Activated CD4-positive, alpha-beta memory T cell treated with anti-CD3 and anti-CD28 coated beads for 36 hours (primary cell): ENCODE measurements at regions of chr7 and their contacts with region 1.

Region 1: GRCh38 chr7:50418086-50418515 is 32.0 kb downstream of the FIGNL1 start:
- DNase-seq: peak; percentile 87
- H3K4me3 Mint-ChIP-seq: no peak overlapping the region
- H3K27ac Mint-ChIP-seq: no peak overlapping the region
- H3K4me1 Mint-ChIP-seq: peaks cover 24% of the 10 kb centered on the region
- H3K27me3 Mint-ChIP-seq: no peaks in the 10 kb centered on the region

Region 2: DNA sequence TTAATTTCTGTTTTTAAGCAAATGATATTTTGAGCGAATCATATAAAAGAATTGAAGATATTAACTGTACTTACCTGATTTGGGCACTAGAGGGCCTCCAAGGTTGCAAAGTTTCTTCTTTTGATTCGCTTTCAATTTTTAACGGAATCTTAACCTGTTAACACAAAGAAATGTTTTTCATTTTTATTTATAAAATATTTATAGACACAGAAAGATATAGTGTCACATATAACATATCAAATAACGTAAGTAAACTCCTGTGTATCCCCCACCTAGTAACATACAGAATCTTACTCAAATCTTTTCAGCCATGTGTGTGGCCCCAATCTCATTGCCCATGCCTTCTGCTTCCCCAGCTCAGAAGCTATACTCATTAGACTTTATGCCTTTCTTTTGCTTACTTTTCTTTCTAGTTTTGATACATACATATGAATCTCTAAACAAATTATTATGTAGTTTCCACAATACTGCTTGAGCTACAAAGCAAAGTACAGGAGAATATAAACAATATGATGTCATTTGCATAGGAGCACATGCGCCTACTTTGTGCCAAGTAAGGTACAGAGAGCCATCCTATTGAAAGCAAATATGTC is 275.6 kb before region 1 on chr7:
- CTCF ChIA-PET with region 1: interaction called, 96 read pairs
- POLR2A ChIA-PET with region 1: no interaction called
- intact Hi-C with region 1: loop called (anchors 1 kb)
- DNase-seq: no peak
- H3K4me3 Mint-ChIP-seq: peak overlapping the region; percentile 14
- H3K27ac Mint-ChIP-seq: peak overlapping the region; percentile 59
- H3K4me1 Mint-ChIP-seq: peaks cover 28% of the 10 kb centered on the region
- H3K27me3 Mint-ChIP-seq: peaks cover 2% of the 10 kb centered on the region

Region 3: GRCh38 chr7:50156706-50157105 is 261.4 kb before region 1 on chr7:
- CTCF ChIA-PET with region 1: interaction called, 10 read pairs
- POLR2A ChIA-PET with region 1: no interaction called
- intact Hi-C with region 1: no loop called
- DNase-seq: no peak
- H3K4me3 Mint-ChIP-seq: peak overlapping the region; percentile 49
- H3K27ac Mint-ChIP-seq: peak overlapping the region; percentile 70
- H3K4me1 Mint-ChIP-seq: peaks cover 34% of the 10 kb centered on the region
- H3K27me3 Mint-ChIP-seq: no peaks in the 10 kb centered on the region

Region 4: DNA sequence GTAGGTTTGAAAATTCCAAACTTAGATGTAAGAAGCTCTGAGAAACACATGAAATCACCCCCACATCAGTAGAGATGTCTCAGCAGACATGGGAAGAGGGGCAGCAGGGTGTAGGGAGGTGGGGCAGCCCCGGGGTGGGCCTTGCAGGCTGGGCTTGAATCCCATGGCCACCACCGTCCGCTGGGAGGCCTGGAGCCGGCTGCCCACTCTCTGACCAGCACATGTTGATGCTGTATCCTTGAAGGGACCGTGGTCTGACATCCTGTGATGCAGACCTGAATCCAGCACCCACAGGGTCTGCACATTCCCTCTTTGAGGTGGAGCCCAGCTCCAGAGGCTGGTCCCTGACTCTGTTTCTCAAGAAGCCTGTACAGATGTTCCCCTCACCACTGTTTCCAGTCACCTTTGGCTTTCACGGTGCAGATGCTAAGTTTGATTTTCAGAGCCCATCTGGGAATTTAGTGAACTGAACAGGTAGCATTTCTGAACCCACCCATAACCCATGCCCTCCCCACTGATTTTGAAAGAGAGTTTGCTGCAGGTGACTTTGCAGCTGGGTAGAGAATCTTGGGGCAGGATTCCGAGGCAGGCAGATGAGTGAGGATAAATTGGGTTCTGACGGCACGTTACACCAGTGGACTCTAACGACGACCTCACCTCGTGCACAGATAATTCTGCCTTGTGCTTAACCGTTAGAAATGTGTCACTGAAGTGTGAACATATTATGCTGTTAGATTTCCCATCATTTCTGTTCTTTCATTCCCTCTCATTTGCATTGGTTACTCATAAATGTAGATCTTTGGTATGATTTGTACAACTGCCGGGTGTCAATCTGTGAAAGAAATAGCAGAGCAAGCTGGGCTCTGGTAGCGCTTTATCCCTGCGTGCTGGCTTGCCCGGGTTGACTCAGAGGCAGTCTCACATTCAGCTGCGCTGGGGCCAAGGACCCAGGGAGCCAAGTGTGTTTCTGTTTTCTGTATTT is 67.8 kb before region 1 on chr7:
- CTCF ChIA-PET with region 1: interaction called, 18 read pairs
- POLR2A ChIA-PET with region 1: no interaction called
- intact Hi-C with region 1: no loop called
- DNase-seq: peak; percentile 94
- H3K4me3 Mint-ChIP-seq: peak overlapping the region; percentile 14
- H3K27ac Mint-ChIP-seq: peak overlapping the region; percentile 92
- H3K4me1 Mint-ChIP-seq: peaks cover 98% of the 10 kb centered on the region
- H3K27me3 Mint-ChIP-seq: no peaks in the 10 kb centered on the region

Region 5: DNA sequence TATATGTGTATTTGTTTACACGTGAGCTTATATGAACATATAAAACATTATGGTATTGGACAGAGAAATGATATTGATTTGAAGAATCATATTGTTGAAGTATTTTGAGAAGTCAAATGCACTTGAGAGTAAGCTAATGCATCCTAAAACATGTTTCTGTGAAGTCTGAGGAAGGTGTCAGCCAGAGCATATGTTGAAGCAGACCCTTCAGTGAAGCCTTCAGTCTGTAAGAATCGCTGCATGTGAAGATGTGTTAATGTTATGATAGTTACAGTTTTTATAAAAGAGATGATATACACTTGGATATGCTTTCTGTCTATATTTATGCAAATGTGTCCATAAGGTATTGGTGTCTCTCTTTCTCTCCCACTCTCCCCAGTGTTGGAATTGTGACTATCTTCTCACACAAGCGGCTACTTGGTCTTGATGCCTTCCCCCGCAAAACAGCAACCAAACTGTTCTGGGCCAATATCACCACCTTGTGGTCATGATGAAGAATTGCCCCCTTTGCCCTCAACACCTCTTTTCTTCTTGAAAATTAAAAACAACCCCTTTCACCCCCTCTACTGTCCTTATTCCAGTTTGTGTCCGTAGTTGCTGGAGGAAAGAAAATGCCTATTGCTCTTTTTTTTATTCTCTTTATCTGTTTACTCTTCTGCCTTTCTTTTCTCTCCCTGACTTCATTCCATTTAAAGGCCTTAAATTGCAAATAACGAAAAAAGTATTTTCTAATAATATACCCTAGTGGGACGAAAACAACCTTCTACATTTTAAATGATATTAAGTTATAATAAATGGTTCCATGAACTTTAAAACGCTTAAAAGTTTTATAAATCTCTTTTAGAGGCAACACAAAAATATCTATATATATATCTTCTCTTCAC is 48.7 kb before region 1 on chr7:
- CTCF ChIA-PET with region 1: interaction called, 57 read pairs
- POLR2A ChIA-PET with region 1: no interaction called
- intact Hi-C with region 1: loop called (anchors 2 kb)
- DNase-seq: peak; percentile 56
- H3K4me3 Mint-ChIP-seq: no peak overlapping the region
- H3K27ac Mint-ChIP-seq: peak overlapping the region; percentile 93
- H3K4me1 Mint-ChIP-seq: peaks cover 97% of the 10 kb centered on the region
- H3K27me3 Mint-ChIP-seq: no peaks in the 10 kb centered on the region

Region 6: DNA sequence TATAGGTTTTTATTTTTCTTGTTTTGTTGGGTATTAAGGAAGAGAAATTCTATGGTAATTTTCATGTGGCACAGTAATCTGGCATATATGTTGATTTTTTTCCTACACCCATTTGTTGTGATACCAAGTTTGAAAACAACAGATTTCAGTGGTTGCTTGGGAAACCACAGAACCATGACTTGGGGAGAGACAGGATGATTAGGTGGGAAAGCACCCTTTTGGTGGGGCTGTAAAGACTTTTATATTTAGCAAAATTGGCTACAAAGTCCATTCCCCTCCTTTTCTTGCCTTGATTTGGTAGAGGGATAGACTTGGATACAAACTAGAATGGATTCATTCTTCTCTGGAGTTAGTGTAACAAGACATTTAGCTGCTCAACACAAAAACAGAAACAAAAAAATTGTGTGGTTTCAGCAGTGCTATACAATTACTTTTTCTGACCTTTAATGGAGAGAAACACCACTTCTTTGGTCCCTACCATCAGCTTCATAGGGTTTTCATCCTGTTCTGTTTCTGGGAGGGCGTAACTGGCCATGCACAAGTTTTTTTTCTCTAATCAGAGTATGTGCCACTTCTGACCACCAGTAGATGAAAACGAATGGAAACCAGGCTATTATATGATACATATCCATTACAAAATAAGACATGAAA is 20.7 kb before region 1 on chr7:
- CTCF ChIA-PET with region 1: interaction called, 20 read pairs
- POLR2A ChIA-PET with region 1: no interaction called
- intact Hi-C with region 1: loop called (anchors 1 kb)
- DNase-seq: peak; percentile 50
- H3K4me3 Mint-ChIP-seq: peak overlapping the region; percentile 20
- H3K27ac Mint-ChIP-seq: peak overlapping the region; percentile 84
- H3K4me1 Mint-ChIP-seq: peaks cover 79% of the 10 kb centered on the region
- H3K27me3 Mint-ChIP-seq: no peaks in the 10 kb centered on the region

Region 7: GRCh38 chr7:50475340-50475739 is 57.2 kb after region 1 on chr7:
- CTCF ChIA-PET with region 1: no interaction called
- POLR2A ChIA-PET with region 1: no interaction called
- intact Hi-C with region 1: no loop called
- DNase-seq: peak; percentile 55
- H3K4me3 Mint-ChIP-seq: no peak overlapping the region
- H3K27ac Mint-ChIP-seq: no peak overlapping the region
- H3K4me1 Mint-ChIP-seq: peaks cover 7% of the 10 kb centered on the region
- H3K27me3 Mint-ChIP-seq: no peaks in the 10 kb centered on the region

Region 8: DNA sequence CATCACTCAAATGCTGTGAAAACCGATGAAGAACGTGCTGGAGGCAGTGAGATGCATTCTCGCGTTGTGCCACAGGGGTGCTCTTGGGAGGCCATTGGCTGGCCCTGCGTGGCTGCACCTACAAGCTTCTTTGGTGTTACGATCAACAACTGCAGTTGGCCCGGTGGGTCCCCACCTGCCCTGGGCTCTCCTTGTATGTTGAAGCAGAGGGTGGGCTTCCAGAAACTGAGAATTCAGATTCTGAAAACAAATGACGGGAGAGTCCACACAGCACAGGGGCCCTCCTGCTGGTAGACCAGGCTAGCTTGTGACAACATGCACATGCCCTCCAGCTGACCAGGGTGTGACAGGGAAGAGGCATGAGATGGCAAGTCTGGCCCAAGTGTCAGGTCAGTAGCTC is 170.8 kb after region 1 on chr7:
- CTCF ChIA-PET with region 1: no interaction called
- POLR2A ChIA-PET with region 1: no interaction called
- intact Hi-C with region 1: no loop called
- DNase-seq: no peak
- H3K4me3 Mint-ChIP-seq: no peak overlapping the region
- H3K27ac Mint-ChIP-seq: no peak overlapping the region
- H3K4me1 Mint-ChIP-seq: no peaks in the 10 kb centered on the region
- H3K27me3 Mint-ChIP-seq: peaks cover 8% of the 10 kb centered on the region